Activated CD8-positive, alpha-beta memory T cell treated with anti-CD3 and anti-CD28 coated beads, Interleukin-2, amount 10 ng/mL, durations not matched to agents 7 days and 5 days (primary cell): ENCODE measurements at regions of chr9 and their contacts with region 1.

Region 1: GRCh38 chr9:109463924-109464625 is 34.0 kb downstream of the PTPN3 start:
- DNase-seq: peak; percentile 65
- ATAC-seq: peak; percentile 55
- H3K4me3 Mint-ChIP-seq: no peak overlapping the region
- H3K27ac Mint-ChIP-seq: peak overlapping the region; percentile 44
- H3K4me1 Mint-ChIP-seq: peaks cover 56% of the 10 kb centered on the region
- H3K27me3 Mint-ChIP-seq: peaks cover 16% of the 10 kb centered on the region

Region 2: DNA sequence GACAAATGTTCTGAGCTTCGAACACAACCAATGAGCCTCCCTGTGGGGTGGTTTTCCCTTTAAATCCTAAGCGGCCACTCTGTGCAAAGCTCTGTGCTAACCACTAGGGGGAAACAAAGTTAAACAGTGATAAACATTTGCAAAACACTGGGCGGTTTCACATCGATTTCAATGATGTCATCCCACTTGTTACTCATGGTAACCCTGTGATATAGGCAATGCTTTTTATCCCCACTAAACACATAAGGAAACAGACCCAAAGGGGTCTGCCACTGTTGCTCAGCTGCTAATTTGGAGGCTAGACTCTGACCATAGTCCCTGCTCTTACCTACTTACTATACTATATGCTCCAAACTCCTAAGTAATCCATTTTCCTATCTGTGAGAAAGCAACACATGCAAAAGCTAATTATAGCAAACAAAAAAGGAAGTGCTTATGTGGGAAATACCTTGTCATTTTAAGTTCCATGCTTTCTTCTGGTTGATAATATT is 23.2 kb before region 1 on chr9:
- CTCF ChIA-PET with region 1: interaction called, 148 read pairs
- DNase-seq: peak; percentile 82
- ATAC-seq: peak; percentile 93
- H3K4me3 Mint-ChIP-seq: no peak overlapping the region
- H3K27ac Mint-ChIP-seq: peak overlapping the region; percentile 71
- H3K4me1 Mint-ChIP-seq: peaks cover 26% of the 10 kb centered on the region
- H3K27me3 Mint-ChIP-seq: peaks cover 37% of the 10 kb centered on the region

Region 3: DNA sequence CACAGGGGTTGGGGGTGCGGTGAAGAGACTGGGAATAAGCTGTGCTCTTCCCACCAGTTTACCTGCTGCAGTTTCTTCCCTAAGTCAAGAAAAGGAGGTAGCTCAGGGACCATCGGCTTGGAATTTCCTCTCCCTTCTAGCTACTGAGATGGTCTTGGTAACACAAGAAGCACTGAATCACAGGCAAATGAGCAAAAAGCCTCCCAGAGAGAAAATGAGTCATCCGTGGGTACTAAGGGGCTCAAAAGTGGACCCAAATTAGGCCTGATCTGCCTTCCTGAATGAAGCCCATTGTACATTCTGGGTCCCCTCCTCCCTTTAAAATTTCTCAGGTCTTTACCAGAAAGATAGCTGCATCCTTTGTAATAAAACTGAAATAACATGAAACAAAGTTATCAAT is 15.9 kb before region 1 on chr9:
- CTCF ChIA-PET with region 1: interaction called, 148 read pairs
- DNase-seq: no peak
- ATAC-seq: peak; percentile 22
- H3K4me3 Mint-ChIP-seq: no peak overlapping the region
- H3K27ac Mint-ChIP-seq: peak overlapping the region; percentile 63
- H3K4me1 Mint-ChIP-seq: peaks cover 19% of the 10 kb centered on the region
- H3K27me3 Mint-ChIP-seq: peaks cover 15% of the 10 kb centered on the region

Region 4: DNA sequence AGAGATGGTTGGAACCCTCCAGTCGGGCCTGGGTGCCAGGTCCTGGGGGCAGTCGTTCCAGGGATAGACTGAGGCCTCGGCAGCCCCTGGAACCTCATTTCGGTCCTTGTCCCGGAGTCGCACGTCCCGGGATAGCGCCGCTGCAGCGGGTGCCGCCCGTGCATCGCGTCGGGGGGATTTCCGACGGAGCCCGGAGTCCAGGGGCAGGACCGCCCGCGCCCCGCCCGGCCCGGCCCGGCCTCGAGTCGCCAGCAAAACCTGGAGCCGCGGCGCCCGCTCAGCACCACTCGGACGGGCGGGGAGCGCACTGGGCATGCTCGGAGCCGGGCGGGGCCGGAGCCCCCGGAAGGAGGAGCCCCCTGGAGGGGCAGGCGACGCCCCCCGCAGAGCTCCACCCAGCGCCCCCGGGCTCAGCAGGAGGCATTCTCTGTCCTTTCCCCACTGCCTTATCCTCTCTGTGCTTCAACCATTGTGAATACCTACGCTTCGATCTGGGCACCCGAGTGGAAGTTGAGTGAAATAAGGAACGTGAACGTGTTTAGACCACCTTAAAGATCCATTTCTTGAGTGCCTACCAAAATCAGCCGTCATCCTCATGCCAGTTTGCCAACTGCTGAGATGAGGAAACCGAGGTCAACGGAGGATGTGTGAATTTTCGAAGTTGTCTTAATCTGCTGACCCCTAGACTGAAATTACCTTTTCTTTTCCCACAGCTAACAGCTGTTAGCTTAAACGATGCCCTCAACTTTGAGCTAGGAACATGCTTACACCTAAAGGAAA is 35.7 kb after region 1 on chr9:
- CTCF ChIA-PET with region 1: no interaction called
- DNase-seq: no peak
- ATAC-seq: no peak
- H3K4me3 Mint-ChIP-seq: no peak overlapping the region
- H3K27ac Mint-ChIP-seq: no peak overlapping the region
- H3K4me1 Mint-ChIP-seq: peaks cover 7% of the 10 kb centered on the region
- H3K27me3 Mint-ChIP-seq: peaks cover 68% of the 10 kb centered on the region